Calu3 (cell line): ENCODE measurements at regions of chr1 and their contacts with region 1.

Region 1: GRCh38 chr1:169694304-169695075 is 16.9 kb downstream of the SELL start:
- DNase-seq: no peak
- H3K4me3 Mint-ChIP-seq: no peak overlapping the region
- H3K27ac Mint-ChIP-seq: peak overlapping the region; percentile 3
- H3K4me1 Mint-ChIP-seq: peaks cover 34% of the 10 kb centered on the region
- H3K27me3 Mint-ChIP-seq: no peaks in the 10 kb centered on the region
- CTCF ChIP-seq: no peak

Region 2: DNA sequence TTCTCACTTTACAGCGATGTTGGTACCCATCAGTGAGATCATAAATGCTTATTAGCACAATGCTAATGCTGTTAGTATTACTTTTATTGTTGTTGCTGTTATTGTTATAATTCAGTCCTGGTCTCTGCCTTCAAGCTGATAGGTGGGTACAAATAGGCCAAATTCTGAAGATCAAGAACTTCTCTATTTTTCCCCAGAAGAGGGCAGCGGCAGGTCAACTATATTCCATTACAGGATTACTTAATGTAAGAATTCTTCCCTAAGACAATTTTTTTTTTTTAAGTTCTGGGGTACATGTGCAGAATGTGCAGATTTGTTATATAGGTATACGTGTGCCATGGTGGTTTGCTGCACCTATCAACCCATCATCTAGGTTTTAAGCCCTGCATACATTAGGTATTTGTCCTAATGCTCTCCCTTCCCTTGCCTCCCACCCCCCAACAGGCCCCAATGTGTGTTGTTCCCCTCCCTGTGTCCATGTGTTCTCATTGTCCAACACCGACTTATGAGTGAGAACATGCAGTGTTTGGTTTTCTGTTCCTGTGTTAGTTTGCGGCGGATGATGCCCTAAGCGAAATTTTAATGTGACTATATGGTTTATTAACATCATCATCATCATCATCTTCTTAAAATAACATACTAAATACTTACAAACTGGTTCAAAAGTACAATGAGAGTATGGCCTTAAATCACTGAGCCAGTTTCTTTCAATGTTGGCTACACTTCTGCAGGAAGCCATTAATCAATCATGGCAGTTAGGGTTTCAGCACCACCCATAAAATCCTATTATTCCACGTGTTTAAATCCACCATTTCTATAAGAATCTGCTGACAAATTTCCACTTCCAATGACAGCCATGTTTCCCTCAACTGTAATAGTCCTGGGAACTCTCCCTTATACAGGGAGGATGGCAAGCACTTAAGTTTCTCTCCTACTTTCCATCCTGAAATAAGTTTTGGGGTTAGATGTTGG is 227.9 kb before region 1 on chr1:
- CTCF ChIA-PET with region 1: no interaction called
- intact Hi-C with region 1: loop called (anchors 10 kb)
- DNase-seq: peak; percentile 56
- H3K4me3 Mint-ChIP-seq: no peak overlapping the region
- H3K27ac Mint-ChIP-seq: no peak overlapping the region
- H3K4me1 Mint-ChIP-seq: peaks cover 2% of the 10 kb centered on the region
- H3K27me3 Mint-ChIP-seq: no peaks in the 10 kb centered on the region
- CTCF ChIP-seq: peak; percentile 59

Region 3: DNA sequence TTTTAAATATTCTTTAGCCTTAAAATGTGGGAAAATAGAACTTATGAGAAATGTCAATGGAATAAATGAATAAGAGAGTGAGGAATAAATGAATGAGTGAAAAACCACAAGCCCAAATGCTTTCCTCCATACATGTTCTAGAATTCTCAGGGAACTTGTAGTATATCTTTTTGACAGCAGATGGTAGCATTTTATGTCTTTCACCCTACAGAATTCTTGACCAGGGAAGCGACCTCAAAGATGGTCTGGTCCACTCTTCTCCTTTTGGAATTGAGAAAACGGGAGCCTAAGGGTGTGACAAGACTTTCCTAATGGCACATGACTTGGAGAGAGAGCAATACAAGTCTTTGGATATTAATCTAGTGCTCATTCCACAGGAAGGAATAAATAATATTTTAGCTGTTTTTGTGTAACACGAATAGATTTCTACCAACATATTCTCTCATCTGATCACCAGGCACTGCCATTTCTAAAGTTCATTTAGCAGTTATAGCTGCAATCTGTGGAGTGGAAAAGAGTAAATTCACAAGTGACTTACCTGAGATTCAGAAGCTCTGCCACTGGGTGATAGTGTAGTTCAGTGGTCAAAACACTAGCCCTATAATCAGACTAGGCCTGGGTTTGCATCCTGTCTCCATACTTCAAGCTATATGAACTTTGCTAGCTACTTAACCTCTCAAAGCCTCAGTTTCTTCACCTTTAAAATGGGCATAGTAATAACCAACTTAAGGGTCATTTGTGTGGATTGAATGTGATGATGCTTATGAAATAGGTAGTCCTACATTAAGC is 93.2 kb before region 1 on chr1:
- CTCF ChIA-PET with region 1: interaction called, 4 read pairs
- intact Hi-C with region 1: loop called (anchors 5 kb)
- DNase-seq: no peak
- H3K4me3 Mint-ChIP-seq: no peak overlapping the region
- H3K27ac Mint-ChIP-seq: no peak overlapping the region
- H3K4me1 Mint-ChIP-seq: peaks cover 22% of the 10 kb centered on the region
- H3K27me3 Mint-ChIP-seq: no peaks in the 10 kb centered on the region
- CTCF ChIP-seq: peak; percentile 46

Region 4: DNA sequence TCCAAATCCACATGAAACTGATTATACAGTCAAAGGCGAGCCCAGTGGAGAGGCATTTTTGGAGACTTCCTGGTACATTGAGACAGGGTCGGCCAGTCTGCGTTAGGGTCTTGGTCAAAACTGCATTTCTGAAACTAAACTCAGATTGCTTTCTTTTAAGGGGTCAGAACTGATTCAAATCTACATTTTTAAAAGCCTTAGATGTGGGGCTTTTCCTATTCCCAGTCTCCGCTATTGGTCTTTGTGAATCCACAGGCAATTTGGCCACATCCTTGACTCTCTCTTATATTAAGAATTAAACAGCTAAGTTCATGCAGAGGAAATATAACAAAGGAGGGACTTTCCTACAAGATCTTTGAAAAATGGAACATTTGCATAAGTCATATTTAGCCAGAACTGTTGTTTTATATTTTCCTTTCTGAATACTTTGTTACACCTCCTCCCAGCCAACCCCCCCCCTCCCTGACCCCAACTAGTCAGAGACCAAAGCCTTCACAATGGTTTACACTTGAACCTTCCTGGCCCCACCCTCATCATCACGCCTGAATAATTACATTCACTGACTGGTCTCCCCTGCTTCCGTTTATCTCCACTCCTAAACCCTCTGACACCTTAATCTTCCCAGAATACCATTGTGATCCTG is 14.0 kb before region 1 on chr1:
- CTCF ChIA-PET with region 1: interaction called, 3 read pairs
- intact Hi-C with region 1: loop called (anchors 1 kb)
- DNase-seq: no peak
- H3K4me3 Mint-ChIP-seq: no peak overlapping the region
- H3K27ac Mint-ChIP-seq: peak overlapping the region; percentile 8
- H3K4me1 Mint-ChIP-seq: peaks cover 38% of the 10 kb centered on the region
- H3K27me3 Mint-ChIP-seq: no peaks in the 10 kb centered on the region
- CTCF ChIP-seq: no peak